ENCODE measurements at regions of chr1 and their contacts with region 1.

Region 1: DNA sequence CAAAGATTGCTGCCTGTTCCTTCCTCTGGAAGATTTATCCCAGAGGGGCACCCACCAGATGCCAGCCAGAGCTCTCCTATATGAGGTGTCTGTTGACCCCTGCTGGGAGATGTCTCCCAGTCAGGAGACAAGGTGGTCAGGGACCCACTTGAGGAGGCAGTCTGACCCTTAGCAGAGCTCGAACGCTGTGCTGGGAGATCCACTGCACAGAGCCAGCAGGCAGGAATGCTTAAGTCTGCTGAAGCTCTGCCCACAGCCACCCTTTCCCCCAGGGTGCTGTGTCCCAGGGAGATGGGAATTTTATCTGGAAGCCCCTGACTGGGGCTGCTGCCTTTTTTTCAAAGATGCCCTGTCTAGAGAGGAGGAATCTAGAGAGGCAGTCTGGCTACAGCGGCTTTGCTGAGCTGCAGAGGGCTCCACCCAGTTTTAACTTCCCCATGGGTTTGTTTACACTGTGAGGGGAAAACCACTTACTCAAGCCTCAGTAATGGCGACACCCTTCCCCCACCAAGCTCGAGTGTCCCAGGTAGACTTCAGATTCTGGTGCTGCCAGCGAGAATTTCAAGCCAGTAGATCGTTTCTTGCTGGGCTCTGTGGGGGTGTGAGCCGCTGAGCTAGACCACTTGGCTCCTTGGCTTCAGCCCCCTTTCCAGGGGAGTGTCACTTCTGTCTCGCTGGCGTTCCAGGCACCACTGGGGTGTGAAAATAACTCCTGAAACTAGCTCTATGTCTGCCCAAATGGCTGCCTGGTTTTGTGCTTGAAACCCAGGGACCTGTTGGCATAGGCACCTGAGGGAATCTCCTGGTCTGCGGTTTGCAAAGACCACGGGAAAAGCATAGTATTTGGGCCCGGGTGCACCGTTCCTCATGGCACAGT is 51.1 kb upstream of the PDC start:
- DNase-seq: no peak
- ATAC-seq: peak; percentile 65
- H3K4me3 Mint-ChIP-seq: no peak overlapping the region
- H3K27ac Mint-ChIP-seq: no peak overlapping the region
- H3K4me1 Mint-ChIP-seq: peaks cover 14% of the 10 kb centered on the region
- H3K27me3 Mint-ChIP-seq: no peaks in the 10 kb centered on the region
- CTCF ChIP-seq: no peak

Region 2: GRCh38 chr1:186283374-186283773 is 228.6 kb before region 1 on chr1:
- CTCF ChIA-PET with region 1: no interaction called
- POLR2A ChIA-PET with region 1: no interaction called
- DNase-seq: no peak
- ATAC-seq: no peak
- H3K4me3 Mint-ChIP-seq: no peak overlapping the region
- H3K27ac Mint-ChIP-seq: no peak overlapping the region
- H3K4me1 Mint-ChIP-seq: no peaks in the 10 kb centered on the region
- H3K27me3 Mint-ChIP-seq: no peaks in the 10 kb centered on the region
- CTCF ChIP-seq: no peak

Region 3: DNA sequence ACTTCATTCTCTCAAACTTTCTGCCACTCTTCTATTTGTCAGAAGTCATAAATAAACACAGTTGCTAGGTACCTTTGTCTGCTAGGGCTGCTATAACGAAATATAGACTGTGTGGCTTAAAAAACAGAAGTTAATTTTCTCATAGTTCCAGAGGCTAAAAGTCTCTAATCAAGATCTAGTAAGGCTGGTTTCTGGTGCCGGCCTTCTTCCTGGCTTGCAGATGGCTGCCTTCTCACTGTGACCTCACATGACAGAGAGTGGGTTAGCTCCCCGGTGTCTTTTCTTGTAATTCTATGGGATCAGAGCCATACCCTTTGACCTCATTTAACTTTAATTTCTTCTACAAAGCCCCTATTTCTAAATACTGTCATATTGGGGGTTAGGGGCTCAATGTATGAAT is 57.0 kb before region 1 on chr1:
- CTCF ChIA-PET with region 1: no interaction called
- POLR2A ChIA-PET with region 1: no interaction called
- DNase-seq: no peak
- ATAC-seq: no peak
- H3K4me3 Mint-ChIP-seq: no peak overlapping the region
- H3K27ac Mint-ChIP-seq: no peak overlapping the region
- H3K4me1 Mint-ChIP-seq: no peaks in the 10 kb centered on the region
- H3K27me3 Mint-ChIP-seq: no peaks in the 10 kb centered on the region
- CTCF ChIP-seq: no peak

Region 4: DNA sequence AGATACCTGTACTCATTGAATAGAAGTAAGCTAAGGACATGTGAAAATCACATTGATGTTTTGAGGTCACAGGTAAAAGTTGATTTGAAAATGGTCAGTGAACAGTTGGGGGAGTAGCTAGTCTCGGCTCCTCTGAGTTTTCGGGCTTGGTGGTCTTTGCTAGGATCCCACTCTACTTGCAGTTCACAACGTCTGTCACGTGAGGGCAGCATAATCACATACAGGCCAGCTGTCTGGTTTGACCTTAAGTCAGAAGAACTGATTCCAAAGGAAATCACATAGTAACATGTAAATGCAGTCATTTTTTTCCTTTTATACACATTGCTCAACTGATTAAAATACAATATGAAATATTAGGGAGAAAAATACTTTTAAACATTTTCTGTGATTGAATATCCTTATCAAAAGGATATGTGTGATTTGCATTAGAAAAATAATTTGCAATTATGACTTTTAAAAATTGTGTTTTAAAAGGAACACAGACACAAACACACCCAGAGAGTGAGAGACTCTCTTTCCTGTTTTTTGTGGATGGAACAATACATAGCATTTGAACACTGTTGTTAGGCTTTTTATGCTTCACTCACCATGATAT is 29.2 kb before region 1 on chr1:
- CTCF ChIA-PET with region 1: interaction called, 11 read pairs
- POLR2A ChIA-PET with region 1: no interaction called
- DNase-seq: peak; percentile 81
- ATAC-seq: peak; percentile 94
- H3K4me3 Mint-ChIP-seq: no peak overlapping the region
- H3K27ac Mint-ChIP-seq: no peak overlapping the region
- H3K4me1 Mint-ChIP-seq: no peaks in the 10 kb centered on the region
- H3K27me3 Mint-ChIP-seq: no peaks in the 10 kb centered on the region
- CTCF ChIP-seq: peak; percentile 65